Vagina (tissue), 2 donors: ENCODE measurements at regions of chr5 and their contacts with region 1.

Region 1: DNA sequence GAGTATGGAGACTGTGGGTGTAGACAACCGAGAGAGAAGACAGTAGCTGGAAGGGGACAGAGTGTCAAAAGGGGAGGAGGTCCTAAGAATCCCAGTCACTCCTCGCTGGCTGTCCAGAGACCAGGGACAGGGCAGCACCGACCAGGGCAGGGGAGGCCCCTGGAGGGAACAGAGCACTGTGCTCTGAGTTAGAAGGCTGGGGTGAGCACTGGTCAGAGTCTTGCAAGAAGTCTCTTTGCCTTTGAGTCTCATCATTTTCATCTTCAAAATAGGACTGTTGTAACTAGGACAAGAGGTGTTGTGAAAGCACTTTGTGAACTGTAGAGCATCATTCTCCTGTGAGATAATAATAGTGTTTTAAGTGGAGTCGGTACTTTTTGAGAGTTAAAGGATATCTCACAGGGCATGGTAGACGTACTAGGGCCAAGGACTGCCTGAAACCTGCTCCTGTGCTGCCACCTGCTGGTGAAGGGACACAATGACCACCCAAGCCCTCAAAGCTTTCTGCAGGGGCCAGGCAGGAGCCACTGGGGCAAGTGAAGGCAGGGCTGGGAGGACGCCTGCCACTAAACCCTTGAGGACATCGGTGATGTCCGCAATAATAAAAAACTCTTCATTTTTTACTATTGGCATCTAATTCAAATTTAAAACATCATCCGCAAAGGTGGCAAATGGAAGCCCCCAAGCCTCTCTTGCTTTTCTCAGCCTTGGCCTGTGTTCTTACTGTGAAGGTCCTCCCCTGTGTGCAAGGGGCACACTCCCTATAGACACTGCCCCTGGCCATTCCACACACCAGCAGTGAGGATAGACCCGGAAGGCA is 28.2 kb downstream of the SLC6A7 start:
- DNase-seq: no peak
- H3K4me3 ChIP-seq: no peak overlapping the region
- H3K27ac ChIP-seq: peak overlapping the region; percentile 82
- H3K4me1 ChIP-seq: peaks cover 40% of the 10 kb centered on the region
- H3K27me3 ChIP-seq: no peaks in the 10 kb centered on the region
- CTCF ChIP-seq: peak; percentile 92 to 98 (median 93)
- POLR2A ChIP-seq: no peak

Region 2: GRCh38 chr5:150129813-150130492 is 88.1 kb before region 1 on chr5:
- intact Hi-C with region 1: loop called (anchors 5 kb)
- DNase-seq: no peak
- H3K4me3 ChIP-seq: no peak overlapping the region
- H3K27ac ChIP-seq: peak overlapping the region; percentile 83
- H3K4me1 ChIP-seq: peaks cover 47% of the 10 kb centered on the region
- H3K27me3 ChIP-seq: no peaks in the 10 kb centered on the region
- CTCF ChIP-seq: peak; percentile 76 to 93 (median 82)
- POLR2A ChIP-seq: no peak

Region 3: DNA sequence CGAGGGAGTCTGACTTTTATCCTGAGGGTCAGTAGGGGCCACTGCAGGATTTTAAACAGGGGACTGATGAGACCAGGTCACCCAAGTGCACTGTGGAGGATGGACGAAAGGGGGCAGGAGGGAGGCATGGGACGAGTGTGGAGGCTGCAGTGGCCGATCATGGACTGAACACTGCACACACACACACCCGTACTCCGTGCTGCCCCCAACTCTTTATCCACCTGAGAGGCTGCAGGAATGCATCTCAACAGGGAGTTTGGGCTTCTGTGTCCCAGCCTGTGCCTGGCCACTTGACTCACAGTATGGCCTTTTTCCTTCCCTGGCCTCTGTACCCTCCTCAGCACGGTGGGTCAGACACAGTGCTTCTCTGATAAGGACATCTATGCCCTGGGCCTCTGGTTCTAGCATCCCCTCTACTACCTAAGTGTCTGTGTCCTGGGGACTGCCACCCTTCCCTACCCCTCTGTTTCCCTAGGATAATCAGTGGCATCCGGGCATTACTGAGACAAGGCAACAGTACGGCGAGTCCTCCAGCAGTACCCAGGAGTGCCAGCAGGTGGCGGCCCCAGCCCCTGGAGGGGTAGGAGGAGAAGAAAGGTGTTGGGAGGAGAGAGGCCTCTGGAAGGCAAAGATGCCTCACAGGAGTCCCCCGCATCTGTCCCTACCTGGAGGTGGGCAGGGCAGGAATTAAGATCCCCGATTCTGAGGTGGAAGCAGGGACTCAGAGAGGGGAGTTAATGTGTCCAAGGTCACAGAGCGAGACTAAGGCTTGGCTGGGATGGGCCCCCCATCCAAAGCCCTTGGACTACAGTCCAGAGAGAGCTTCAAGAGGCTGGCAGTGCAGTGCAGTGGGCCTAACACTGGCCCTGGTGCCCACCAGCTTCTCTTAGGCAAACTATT is 56.6 kb before region 1 on chr5:
- intact Hi-C with region 1: loop called (anchors 5 kb)
- DNase-seq: no peak
- H3K4me3 ChIP-seq: no peak overlapping the region
- H3K27ac ChIP-seq: peak overlapping the region; percentile 83
- H3K4me1 ChIP-seq: peaks cover 86% of the 10 kb centered on the region
- H3K27me3 ChIP-seq: no peaks in the 10 kb centered on the region
- CTCF ChIP-seq: peak; percentile 67 to 97 (median 91)
- POLR2A ChIP-seq: no peak